ENCODE measurements at regions of chr10 and their contacts with region 1.

Region 1: DNA sequence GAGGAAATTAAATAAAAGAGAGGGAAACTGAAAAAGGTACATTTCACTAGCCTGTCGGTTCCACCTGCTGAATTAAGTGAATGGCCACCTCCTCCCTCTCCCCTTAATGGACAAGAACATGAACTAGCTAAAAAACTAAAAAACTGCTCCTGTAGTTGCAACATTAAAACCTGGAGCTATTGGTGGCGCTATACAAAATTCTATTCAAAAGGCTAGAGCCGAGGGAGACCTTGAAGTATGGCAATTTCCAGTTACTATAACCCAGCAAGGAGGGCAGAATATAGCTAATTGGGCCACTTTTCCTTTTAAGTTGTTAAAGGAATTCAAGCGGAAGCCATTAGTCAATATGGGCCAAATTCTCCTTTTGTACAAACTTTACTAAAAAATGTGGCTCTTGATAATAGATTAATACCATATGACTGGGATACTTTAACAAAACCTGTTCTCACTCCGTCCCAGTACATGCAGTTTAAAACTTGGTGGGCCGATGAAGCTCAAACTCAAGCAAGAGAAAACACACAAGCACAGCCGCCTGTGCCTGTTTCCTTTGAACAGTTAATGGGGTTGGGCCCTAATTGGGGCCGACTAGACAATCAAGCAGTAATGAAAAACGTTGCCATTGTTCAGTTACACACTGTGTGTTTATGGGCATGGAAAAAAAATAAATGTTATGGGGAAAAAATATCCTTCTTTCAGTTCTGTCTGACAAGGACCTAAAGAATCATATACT is 6.5 kb upstream of the CHST3 start:
- DNase-seq: no peak
- H3K4me3 ChIP-seq: no peak overlapping the region
- H3K27ac ChIP-seq: no peak overlapping the region
- H3K4me1 ChIP-seq: no peaks in the 10 kb centered on the region
- H3K27me3 ChIP-seq: peaks cover 0 to 10% (median 5%) of the 10 kb centered on the region in 4 experiments; a peak in 6 of 7 replicates
- CTCF ChIP-seq: peak in 2 of 3 experiments; percentile 37 to 40; a peak in 2 of 4 replicates
- EP300 ChIP-seq: no peak
- POLR2A ChIP-seq: no peak
- RAD21 ChIP-seq: peak in 1 of 2 experiments; percentile 10; a peak in 1 of 4 replicates

Region 2: GRCh38 chr10:71939304-71939703 is 18.4 kb before region 1 on chr10:
- CTCF ChIA-PET with region 1: interaction called, 10 read pairs
- POLR2A ChIA-PET with region 1: interaction called, 3 read pairs
- DNase-seq: no peak
- H3K4me3 ChIP-seq: no peak overlapping the region
- H3K27ac ChIP-seq: no peak overlapping the region
- H3K4me1 ChIP-seq: no peaks in the 10 kb centered on the region
- H3K27me3 ChIP-seq: no peaks in the 10 kb centered on the region
- CTCF ChIP-seq: no peak
- EP300 ChIP-seq: no peak
- POLR2A ChIP-seq: no peak
- RAD21 ChIP-seq: no peak

Region 3: DNA sequence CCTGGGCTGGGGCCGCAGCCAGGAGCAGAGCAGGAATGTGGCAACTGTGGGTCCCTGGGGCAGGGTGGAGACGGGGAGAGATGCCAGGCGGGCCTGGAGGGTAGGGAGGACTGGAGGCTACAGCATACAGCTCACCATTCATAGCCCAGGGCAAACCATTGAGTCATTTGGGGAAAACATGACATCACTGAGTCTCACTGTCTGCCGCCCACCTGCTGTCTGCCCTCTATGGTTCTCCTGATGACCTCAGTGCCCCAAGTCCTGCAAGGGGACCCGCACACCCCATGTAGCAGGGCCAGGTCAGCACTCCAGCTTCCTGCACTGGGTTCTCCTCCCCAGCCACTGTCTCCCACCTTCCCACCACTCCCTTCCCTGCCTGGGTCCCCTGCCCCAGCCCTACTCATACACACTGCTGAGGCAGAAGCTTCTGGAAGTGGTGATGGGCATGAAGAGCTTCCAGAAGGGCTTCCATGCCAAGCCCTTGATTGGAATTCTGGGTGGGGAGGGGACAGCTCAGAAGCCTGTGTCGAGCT is 16.8 kb after region 1 on chr10:
- CTCF ChIA-PET with region 1: interaction called, 68 read pairs
- POLR2A ChIA-PET with region 1: interaction called, 8 read pairs
- DNase-seq: no peak
- H3K4me3 ChIP-seq: no peak overlapping the region
- H3K27ac ChIP-seq: no peak overlapping the region
- H3K4me1 ChIP-seq: peaks cover 0 to 15% (median 4%) of the 10 kb centered on the region in 4 experiments; a peak in 4 of 7 replicates
- H3K27me3 ChIP-seq: no peaks in the 10 kb centered on the region
- CTCF ChIP-seq: no peak
- EP300 ChIP-seq: no peak
- POLR2A ChIP-seq: no peak
- RAD21 ChIP-seq: no peak

Region 4: GRCh38 chr10:71999360-72000072 is 41.8 kb after region 1 on chr10:
- CTCF ChIA-PET with region 1: interaction called, 11 read pairs
- POLR2A ChIA-PET with region 1: no interaction called
- DNase-seq: no peak
- H3K4me3 ChIP-seq: no peak overlapping the region
- H3K27ac ChIP-seq: no peak overlapping the region
- H3K4me1 ChIP-seq: peaks cover 0 to 8% (median 1%) of the 10 kb centered on the region in 4 experiments; a peak in 3 of 7 replicates
- H3K27me3 ChIP-seq: no peaks in the 10 kb centered on the region
- CTCF ChIP-seq: no peak
- EP300 ChIP-seq: no peak
- POLR2A ChIP-seq: no peak
- RAD21 ChIP-seq: no peak

Region 5: DNA sequence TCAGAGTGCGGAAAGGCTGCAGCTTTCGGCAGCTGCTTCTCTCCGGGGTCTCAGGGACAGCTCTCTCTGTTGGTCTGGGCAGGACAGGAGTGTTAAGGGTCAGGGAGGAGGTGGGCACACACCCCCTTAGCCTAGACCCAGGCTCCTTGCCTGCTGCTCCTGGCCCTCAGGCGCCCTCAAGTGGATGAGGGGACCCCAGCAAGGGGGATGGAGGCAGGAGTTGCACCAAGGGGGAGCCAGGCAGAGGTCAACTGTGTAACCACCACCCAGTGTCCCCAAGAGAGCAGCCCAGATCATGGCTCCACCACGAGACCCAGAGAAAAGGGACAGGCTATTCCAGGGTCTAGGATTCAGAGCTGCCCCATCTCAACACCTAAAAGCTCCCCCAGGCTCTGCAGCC is 103.8 kb after region 1 on chr10:
- CTCF ChIA-PET with region 1: interaction called, 18 read pairs
- POLR2A ChIA-PET with region 1: no interaction called
- DNase-seq: peak in 1 of 2 experiments; percentile 71
- H3K4me3 ChIP-seq: no peak overlapping the region
- H3K27ac ChIP-seq: no peak overlapping the region
- H3K4me1 ChIP-seq: peaks cover 0 to 9% (median 7%) of the 10 kb centered on the region in 4 experiments; a peak in 4 of 7 replicates
- H3K27me3 ChIP-seq: no peaks in the 10 kb centered on the region
- CTCF ChIP-seq: peak; percentile 70 to 76 (median 71)
- EP300 ChIP-seq: no peak
- POLR2A ChIP-seq: no peak
- RAD21 ChIP-seq: peak; percentile 64 to 74

Measured in H1 (cell line).